Prostate gland (tissue), 2 donors: ENCODE measurements at regions of chr2 and their contacts with region 1.

Region 1: GRCh38 chr2:28392297-28393113 is at the start of gene FOSL2:
- DNase-seq: peak; percentile 98
- H3K4me3 ChIP-seq: peak within 1 kb of the TSS; percentile 88 to 96
- H3K27ac ChIP-seq: peak within 1 kb of the TSS; percentile 100
- H3K4me1 ChIP-seq: peaks cover under 1% of the 10 kb centered on the region
- H3K27me3 ChIP-seq: no peaks in the 10 kb centered on the region
- CTCF ChIP-seq: peak in 1 of 4 experiments; percentile 16
- POLR2A ChIP-seq: peak; percentile 99
- total RNA-seq, gene FOSL2: 57.4 to 94.2 TPM

Region 2: GRCh38 chr2:27723372-27724144 is 668.9 kb before region 1 on chr2:
- intact Hi-C with region 1: loop called (anchors 5 kb)
- DNase-seq: peak; percentile 73
- H3K4me3 ChIP-seq: no peak overlapping the region
- H3K27ac ChIP-seq: peak overlapping the region; percentile 70 to 72
- H3K4me1 ChIP-seq: no peaks in the 10 kb centered on the region
- H3K27me3 ChIP-seq: no peaks in the 10 kb centered on the region
- CTCF ChIP-seq: peak; percentile 55 to 91 (median 74)
- POLR2A ChIP-seq: no peak

Region 3: DNA sequence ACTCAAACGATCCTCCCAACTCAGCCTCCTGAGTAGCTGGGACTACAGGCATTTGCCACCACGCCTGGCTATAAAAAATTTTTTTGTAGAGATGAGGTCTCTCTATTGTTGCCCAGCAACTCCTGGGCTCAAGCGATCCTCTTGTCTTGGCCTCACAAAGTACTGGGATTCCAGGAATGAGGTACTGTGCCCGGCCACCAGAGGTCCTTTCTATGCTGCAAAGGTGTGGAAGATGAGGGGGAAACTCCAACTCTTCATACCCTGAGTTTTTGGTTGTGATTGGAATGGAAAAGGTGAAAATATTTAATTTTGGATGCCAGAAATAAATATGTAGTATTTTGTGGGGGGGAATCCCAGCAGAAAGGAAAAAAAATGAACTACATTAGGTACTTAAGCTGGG is 585.0 kb before region 1 on chr2:
- intact Hi-C with region 1: no loop called
- DNase-seq: peak; percentile 46
- H3K4me3 ChIP-seq: no peak overlapping the region
- H3K27ac ChIP-seq: no peak overlapping the region
- H3K4me1 ChIP-seq: no peaks in the 10 kb centered on the region
- H3K27me3 ChIP-seq: no peaks in the 10 kb centered on the region
- CTCF ChIP-seq: peak in 3 of 4 experiments; percentile 46 to 67 (median 54)
- POLR2A ChIP-seq: no peak

Region 4: GRCh38 chr2:27823569-27823968 is 568.9 kb before region 1 on chr2:
- intact Hi-C with region 1: loop called (anchors 10 kb)
- DNase-seq: no peak
- H3K4me3 ChIP-seq: no peak overlapping the region
- H3K27ac ChIP-seq: no peak overlapping the region
- H3K4me1 ChIP-seq: no peaks in the 10 kb centered on the region
- H3K27me3 ChIP-seq: no peaks in the 10 kb centered on the region
- CTCF ChIP-seq: no peak
- POLR2A ChIP-seq: no peak

Region 5: GRCh38 chr2:27954771-27955383 is 437.6 kb before region 1 on chr2:
- intact Hi-C with region 1: loop called (anchors 5 kb)
- DNase-seq: peak; percentile 31
- H3K4me3 ChIP-seq: no peak overlapping the region
- H3K27ac ChIP-seq: peak overlapping the region in 1 of 2 donors; percentile 20
- H3K4me1 ChIP-seq: peaks cover 2% of the 10 kb centered on the region
- H3K27me3 ChIP-seq: no peaks in the 10 kb centered on the region
- CTCF ChIP-seq: peak in 2 of 4 experiments; percentile 22 to 34
- POLR2A ChIP-seq: no peak

Region 6: GRCh38 chr2:28137221-28137620 is 255.3 kb before region 1 on chr2:
- intact Hi-C with region 1: loop called (anchors 10 kb)
- DNase-seq: peak; percentile 80
- H3K4me3 ChIP-seq: no peak overlapping the region
- H3K27ac ChIP-seq: peak overlapping the region; percentile 15 to 62
- H3K4me1 ChIP-seq: peaks cover 4% of the 10 kb centered on the region
- H3K27me3 ChIP-seq: no peaks in the 10 kb centered on the region
- CTCF ChIP-seq: no peak
- POLR2A ChIP-seq: no peak

Region 7: GRCh38 chr2:28311660-28312249 is 80.8 kb before region 1 on chr2:
- intact Hi-C with region 1: no loop called
- DNase-seq: no peak
- H3K4me3 ChIP-seq: no peak overlapping the region
- H3K27ac ChIP-seq: no peak overlapping the region
- H3K4me1 ChIP-seq: no peaks in the 10 kb centered on the region
- H3K27me3 ChIP-seq: no peaks in the 10 kb centered on the region
- CTCF ChIP-seq: no peak
- POLR2A ChIP-seq: no peak

Region 8: DNA sequence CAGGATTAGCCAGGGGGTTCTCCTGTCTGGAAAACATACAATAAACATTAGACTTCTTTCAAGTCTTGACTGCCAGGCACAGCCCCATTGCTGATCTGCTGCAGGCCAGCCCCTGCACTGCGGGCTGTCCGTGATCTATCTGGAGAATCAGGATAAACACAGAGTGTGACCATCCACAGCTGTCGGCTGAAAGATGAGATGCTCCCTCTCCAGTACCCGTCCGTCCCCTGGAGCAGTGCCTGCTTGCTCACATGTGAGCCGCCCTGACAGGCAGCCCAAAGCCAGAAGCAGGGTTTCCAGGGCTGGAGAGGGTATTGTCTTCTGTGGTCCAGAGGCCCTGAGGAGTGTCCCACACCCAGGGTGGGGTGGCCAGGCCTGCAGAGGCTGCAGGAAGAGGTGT is 45.9 kb before region 1 on chr2:
- intact Hi-C with region 1: loop called (anchors 5 kb)
- DNase-seq: no peak
- H3K4me3 ChIP-seq: no peak overlapping the region
- H3K27ac ChIP-seq: no peak overlapping the region
- H3K4me1 ChIP-seq: peaks cover 5% of the 10 kb centered on the region
- H3K27me3 ChIP-seq: no peaks in the 10 kb centered on the region
- CTCF ChIP-seq: no peak
- POLR2A ChIP-seq: no peak

Region 9: DNA sequence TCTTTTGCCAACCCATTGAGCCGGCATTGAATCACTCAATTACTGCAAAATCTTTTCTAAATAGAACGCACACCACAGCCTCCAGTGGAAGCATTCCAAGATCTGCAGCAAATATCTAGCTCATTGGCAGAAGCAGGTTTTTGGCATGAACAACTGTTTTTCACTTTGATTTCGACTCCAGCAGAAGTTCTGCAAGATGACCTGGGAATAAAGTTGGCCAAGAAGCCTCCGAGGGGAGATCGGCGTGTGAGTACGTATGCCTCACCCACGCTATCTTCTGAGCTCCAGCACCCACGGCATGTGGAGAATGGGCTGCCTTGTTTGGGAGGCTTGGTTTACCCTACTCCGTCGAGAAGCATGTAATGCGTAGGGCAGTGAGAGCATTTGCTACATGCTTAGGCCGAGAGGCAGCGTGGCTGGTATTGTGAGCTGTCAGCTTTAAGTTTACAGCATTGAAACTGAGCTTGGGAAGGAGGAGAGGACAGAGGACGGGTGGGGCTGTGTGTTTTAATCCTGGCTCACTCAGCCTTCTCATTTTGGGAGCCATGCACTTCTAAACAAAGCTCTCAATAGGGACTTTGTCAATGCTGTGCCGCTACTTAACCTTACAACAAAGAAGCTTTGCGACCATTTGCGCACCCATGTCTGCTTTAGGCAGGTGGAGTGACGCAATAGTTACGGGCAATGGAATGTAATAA is 671.3 kb after region 1 on chr2:
- intact Hi-C with region 1: no loop called
- DNase-seq: peak; percentile 28
- H3K4me3 ChIP-seq: no peak overlapping the region
- H3K27ac ChIP-seq: peak overlapping the region; percentile 28 to 71
- H3K4me1 ChIP-seq: peaks cover 3% of the 10 kb centered on the region
- H3K27me3 ChIP-seq: no peaks in the 10 kb centered on the region
- CTCF ChIP-seq: no peak
- POLR2A ChIP-seq: no peak